Activated T-helper 2 cell treated with anti-CD3 and anti-CD28 coated beads, Interferon-gamma antibody, Interleukin-2, Interleukin-4, amounts not matched to agents 10 μg/mL and 5 μg/mL and 100 μg/mL, durations not matched to agents 14 hours and 24 hours and 36 hours (primary cell): ENCODE measurements at regions of chr11 and their contacts with region 1.

Region 1: GRCh38 chr11:67507864-67508485 is at the start of gene CDK2AP2:
- DNase-seq: peak; percentile 97
- H3K4me3 Mint-ChIP-seq: peak within 1 kb of the TSS; percentile 92
- H3K27ac Mint-ChIP-seq: peak within 1 kb of the TSS; percentile 78
- H3K4me1 Mint-ChIP-seq: peaks cover 24% of the 10 kb centered on the region
- H3K27me3 Mint-ChIP-seq: peaks cover 11% of the 10 kb centered on the region
- total RNA-seq, gene CDK2AP2: 117 and 119 TPM in 2 replicates

Region 2: GRCh38 chr11:67265633-67266423 is 242.1 kb before region 1 on chr11:
- intact Hi-C with region 1: loop called (anchors 5 kb)
- DNase-seq: peak; percentile 77
- H3K4me3 Mint-ChIP-seq: peak overlapping the region; percentile 78
- H3K27ac Mint-ChIP-seq: peak overlapping the region; percentile 85
- H3K4me1 Mint-ChIP-seq: peaks cover 65% of the 10 kb centered on the region
- H3K27me3 Mint-ChIP-seq: no peaks in the 10 kb centered on the region

Region 3: DNA sequence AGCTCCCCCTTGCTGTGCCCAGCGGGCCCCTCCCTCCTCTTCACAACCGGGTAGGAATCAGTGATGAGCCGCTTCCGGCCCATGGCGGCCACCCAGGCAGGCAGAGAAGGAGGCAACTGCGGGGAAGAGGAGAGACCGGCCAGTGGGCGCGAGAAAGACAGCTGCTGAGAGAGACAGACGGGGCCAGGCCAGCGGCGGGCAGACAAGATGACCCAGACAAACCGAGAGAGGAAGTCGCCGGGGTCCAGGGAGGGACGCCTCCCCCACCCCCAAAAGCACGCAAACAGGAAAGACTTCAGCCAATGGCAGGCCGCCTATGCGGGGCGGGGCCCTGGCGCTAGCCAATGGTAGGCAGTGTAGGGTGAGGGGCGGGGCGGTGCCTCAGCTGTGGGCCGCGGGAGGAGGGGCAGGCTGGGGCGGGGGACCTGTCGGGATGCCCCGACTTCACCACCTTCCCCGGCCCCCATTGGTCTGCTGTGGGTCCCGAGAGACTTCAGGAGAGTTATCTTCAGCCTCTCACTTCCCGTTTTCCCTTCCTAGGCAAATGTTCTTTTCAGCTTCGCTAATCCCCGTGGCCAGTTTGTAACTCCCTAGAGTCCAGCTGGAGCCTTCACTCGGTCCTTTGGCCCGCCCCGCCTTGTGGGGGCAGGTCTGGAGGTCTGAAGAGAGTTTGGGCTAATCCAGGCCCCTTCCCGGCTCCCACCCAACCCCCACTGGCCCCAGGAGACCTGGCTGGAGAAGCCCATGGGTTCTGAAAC is 154.5 kb before region 1 on chr11 and contains the start of gene POLD4:
- intact Hi-C with region 1: loop called (anchors 1 kb)
- DNase-seq: peak; percentile 94
- H3K4me3 Mint-ChIP-seq: peak within 1 kb of the TSS; percentile 96
- H3K27ac Mint-ChIP-seq: peak within 1 kb of the TSS; percentile 100
- H3K4me1 Mint-ChIP-seq: peaks cover 35% of the 10 kb centered on the region
- H3K27me3 Mint-ChIP-seq: peaks cover 8% of the 10 kb centered on the region
- total RNA-seq, gene POLD4: 41.1 and 50.1 TPM in 2 replicates

Region 4: DNA sequence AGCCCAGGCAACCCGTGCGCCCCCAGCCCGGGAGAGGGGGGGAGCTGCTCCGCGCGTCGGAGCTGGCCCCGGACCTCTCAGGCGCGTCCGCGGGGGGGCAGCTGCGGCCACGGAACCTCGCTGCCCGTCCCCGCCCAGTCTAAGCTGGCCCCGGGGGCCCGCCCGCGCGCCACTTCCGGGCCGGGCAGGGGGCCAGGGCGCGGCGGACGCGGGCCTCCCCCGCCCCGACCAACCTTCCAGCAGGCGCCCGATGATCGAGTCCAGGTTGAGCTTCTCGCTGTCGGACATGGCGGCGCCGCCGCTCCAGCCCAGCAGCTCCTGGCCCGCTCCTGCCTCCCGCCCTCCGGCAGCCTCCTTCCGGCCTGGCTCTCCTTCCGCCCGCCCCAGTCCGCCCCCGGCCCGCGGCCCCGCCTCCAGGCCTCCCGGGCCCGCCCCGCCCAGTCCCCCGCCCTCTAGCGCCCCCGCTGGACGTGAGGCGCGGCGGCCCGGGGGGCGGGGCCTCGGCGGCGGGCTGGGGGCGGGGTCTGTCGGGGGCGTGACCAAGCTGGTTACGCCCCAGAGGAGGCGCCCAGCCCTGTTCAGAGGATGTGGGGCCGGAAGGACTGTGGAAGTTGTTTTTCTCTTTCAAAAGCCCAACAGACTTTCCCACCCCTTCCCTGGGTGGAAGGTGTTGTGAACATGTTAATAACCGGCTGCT is 106.3 kb before region 1 on chr11 and contains the start of gene PPP1CA:
- intact Hi-C with region 1: loop called (anchors 1 kb)
- DNase-seq: peak; percentile 86
- H3K4me3 Mint-ChIP-seq: peak within 1 kb of the TSS; percentile 97
- H3K27ac Mint-ChIP-seq: peak within 1 kb of the TSS; percentile 83
- H3K4me1 Mint-ChIP-seq: peaks cover 40% of the 10 kb centered on the region
- H3K27me3 Mint-ChIP-seq: no peaks in the 10 kb centered on the region
- total RNA-seq, gene PPP1CA: 250 and 262 TPM in 2 replicates

Region 5: GRCh38 chr11:67439321-67439883 is 68.6 kb before region 1 on chr11:
- intact Hi-C with region 1: loop called (anchors 1 kb)
- DNase-seq: no peak
- H3K4me3 Mint-ChIP-seq: peak overlapping the region; percentile 94
- H3K27ac Mint-ChIP-seq: peak overlapping the region; percentile 95
- H3K4me1 Mint-ChIP-seq: peaks cover 37% of the 10 kb centered on the region
- H3K27me3 Mint-ChIP-seq: no peaks in the 10 kb centered on the region

Region 6: GRCh38 chr11:67482825-67483798 is 24.9 kb before region 1 on chr11 and contains the start of gene AIP:
- intact Hi-C with region 1: loop called (anchors 1 kb)
- DNase-seq: peak; percentile 98
- H3K4me3 Mint-ChIP-seq: peak within 1 kb of the TSS; percentile 83
- H3K27ac Mint-ChIP-seq: peak within 1 kb of the TSS; percentile 99
- H3K4me1 Mint-ChIP-seq: peaks cover 42% of the 10 kb centered on the region
- H3K27me3 Mint-ChIP-seq: no peaks in the 10 kb centered on the region
- total RNA-seq, gene AIP: 190 and 191 TPM in 2 replicates

Region 7: GRCh38 chr11:67494371-67495287 is 13.3 kb before region 1 on chr11:
- intact Hi-C with region 1: no loop called
- DNase-seq: no peak
- H3K4me3 Mint-ChIP-seq: no peak overlapping the region
- H3K27ac Mint-ChIP-seq: no peak overlapping the region
- H3K4me1 Mint-ChIP-seq: peaks cover 2% of the 10 kb centered on the region
- H3K27me3 Mint-ChIP-seq: no peaks in the 10 kb centered on the region

Region 8: DNA sequence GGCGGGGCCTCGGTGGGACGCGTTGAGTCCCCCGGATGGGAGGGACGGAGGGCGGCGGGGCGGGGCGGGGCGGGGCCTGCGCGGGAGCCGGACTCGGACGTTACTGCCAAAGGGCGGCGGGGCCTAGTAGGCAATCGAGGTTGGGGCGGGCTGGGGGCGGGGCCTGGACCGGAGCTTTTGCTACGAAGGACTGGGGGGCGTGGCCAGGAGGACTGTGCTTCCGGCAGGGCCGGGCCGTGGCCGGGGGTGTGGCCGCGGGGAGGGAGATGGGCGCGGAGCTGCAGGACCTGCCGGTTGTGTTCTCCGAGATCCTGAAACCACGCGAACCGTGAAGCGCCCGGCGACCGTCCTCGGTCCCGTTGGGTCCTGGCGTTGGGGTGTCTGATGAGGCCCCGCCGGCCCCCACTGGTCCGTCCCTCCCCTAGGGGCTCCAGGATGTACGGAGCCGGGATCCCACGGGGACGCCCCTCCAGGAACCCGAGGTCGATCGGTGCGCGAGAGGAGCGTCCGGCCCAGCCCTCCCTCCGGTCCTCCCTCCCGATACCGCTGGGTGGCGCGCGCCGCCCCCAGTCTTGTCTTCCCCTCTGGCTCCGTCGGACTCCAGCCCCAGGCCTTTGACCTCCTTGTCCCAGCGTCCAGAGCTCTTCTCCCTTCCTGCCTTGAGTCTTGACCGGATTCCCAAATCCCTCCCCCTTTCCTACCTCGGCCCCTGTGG is 122.4 kb after region 1 on chr11:
- intact Hi-C with region 1: loop called (anchors 5 kb)
- DNase-seq: peak; percentile 95
- H3K4me3 Mint-ChIP-seq: peak overlapping the region; percentile 85
- H3K27ac Mint-ChIP-seq: peak overlapping the region; percentile 93
- H3K4me1 Mint-ChIP-seq: peaks cover 9% of the 10 kb centered on the region
- H3K27me3 Mint-ChIP-seq: no peaks in the 10 kb centered on the region